BJ (cell line): ENCODE measurements at regions of chr4 and their contacts with region 1.

Region 1: DNA sequence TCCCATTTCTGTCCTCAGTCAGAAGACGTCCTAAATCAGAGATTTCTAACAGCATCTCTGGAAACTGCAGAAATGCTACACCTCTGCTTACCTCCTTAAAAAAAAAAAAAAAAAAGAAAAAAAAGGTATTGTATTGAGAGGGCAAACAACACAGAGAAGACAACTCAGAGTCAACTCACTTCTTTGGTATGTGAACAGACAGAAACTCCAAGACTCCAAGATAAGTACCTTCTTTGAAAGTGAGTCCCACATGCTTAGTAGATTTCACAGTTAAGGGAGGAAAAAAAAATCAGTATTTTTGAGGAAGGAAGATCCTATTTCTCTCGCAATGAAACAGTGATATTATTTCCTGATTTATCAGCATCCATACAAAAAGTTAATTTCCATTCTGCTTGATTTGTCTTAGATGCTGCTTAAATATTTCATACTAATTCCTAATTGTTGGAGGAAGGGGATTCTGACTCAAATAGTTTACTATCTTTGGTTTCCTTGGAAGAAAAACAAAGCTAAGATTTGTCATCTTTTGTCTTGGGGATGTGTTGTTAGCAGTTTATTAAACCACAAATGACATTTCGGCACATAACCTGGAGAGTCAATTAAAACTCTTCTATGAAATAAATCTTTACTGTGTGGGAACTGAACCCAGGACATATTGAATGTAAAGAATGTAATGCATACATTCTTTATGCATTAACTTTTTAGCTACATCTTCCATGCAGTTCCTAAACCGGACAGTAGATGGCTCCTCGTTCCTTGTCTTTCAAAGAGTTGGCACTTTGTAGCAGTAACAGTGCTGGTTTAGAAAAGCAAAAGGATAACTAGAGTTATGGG is 4.7 kb downstream of the RASGEF1B start:
- DNase-seq: no peak
- H3K4me3 ChIP-seq: no peak overlapping the region
- H3K27me3 ChIP-seq: peaks cover 17% of the 10 kb centered on the region
- CTCF ChIP-seq: peak; percentile 90

Region 2: DNA sequence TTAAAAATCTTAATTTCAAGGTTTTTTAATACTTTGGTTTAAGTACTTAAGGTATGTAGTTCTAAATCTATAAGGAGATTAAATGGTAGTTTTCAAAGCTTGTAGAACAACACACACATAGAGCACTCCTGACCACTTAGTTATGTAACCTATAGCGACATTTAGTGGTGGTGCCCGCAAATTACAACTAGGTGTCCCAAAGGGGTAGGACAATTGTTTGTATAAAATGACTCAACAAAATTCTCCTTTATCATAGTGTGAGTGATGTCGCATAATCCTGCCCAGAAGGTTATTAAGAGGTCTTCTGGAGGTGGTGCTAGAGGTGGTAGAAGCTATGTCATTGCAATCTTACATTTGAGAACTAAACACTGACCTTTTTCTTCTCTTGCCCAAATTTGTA is 377.7 kb after region 1 on chr4:
- CTCF ChIA-PET with region 1: interaction called, 19 read pairs
- POLR2A ChIA-PET with region 1: no interaction called
- DNase-seq: peak; percentile 9
- H3K4me3 ChIP-seq: no peak overlapping the region
- H3K27me3 ChIP-seq: no peaks in the 10 kb centered on the region
- CTCF ChIP-seq: peak; percentile 68

Region 3: DNA sequence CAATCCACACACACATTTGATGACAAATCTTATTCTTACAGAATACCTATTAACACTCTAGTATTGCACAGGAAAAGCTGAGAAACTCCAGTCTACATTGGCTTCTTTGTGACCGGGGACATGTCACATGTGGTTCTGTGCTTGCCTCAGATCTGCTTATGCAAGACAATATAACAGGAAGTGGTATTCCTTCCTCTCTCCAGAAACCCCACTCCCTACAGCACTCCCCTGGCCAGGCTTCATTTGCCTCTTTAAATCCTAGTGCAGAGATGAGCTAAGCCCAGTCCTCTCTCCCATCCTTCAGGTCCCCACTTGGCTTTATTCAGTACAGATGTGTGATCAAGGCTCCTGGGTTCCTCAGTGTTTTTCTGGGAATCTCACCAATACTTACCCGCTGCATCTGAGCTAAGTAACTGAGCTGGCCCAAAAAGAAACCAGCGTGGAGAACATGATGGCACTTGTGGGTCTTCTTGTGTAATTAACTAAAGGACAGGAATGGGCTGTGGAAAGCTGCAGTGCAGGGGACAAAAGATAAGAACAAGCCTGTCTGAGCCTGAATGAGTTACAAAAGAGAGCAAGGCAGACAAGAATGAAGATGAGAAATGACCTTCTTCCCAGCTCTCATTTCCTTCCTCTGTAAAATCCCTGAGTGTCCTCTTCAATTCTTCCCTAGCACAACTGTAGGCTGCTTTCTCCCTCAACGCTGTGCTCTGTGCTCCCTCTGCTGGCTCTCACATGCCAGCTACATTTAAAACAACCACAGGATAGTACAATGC is 801.2 kb after region 1 on chr4:
- CTCF ChIA-PET with region 1: interaction called, 13 read pairs
- POLR2A ChIA-PET with region 1: no interaction called
- DNase-seq: peak; percentile 2
- H3K4me3 ChIP-seq: no peak overlapping the region
- H3K27me3 ChIP-seq: 0 out of 2 replicates have a peak, but pooled peaks cover 2% of the 10 kb centered on the region
- CTCF ChIP-seq: peak; percentile 80